ENCODE measurements at regions of chr12 and their contacts with region 1.

Region 1: DNA sequence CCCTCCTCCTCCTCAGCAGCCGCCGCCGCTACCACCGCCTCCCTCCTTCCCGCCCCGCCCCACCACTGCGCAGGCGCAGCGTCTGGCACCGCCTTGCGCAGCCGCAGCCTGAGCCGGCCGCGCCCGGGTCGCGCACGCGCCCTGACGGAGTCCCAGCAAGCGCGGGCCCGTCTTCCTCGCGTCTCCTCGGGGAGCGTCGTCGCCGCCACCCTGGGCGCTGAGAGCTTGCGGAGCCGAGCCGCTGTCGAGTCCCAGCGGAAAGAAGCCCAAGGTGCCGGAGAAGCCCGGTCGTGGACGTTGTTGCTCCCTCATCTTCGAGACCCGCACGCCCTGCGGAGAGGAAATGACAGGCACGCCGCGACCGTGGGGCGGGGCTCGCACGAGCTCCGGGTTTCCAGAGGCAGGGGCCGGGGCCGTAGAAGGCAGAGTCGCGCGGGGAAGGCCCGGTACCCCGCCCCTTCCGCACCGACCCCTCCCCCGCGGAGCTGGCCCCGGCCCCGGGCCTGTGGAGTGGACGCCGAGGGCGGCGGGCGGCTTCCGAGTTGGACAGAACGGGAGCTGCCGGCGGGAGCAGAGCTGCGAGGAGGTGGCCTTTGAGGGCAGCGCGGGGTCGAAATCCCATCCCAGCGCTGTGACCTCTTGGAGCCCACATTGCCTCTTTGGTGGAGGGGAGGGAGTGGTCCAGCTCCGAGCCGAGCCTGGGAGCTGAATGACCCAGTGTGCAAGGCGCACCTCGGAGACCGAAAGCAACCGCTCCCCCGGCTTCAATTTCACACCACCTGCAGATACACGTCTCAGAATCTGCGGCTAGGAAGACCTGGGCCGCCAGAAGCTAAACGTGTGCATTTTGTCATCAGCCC is 469 bp upstream of the RAB35 start:
- DNase-seq: no peak
- ATAC-seq: peak; percentile 64
- H3K4me3 ChIP-seq: peak overlapping the region; percentile 76
- H3K27ac ChIP-seq: peak overlapping the region; percentile 97
- H3K4me1 ChIP-seq: peaks cover 54% of the 10 kb centered on the region
- H3K27me3 ChIP-seq: no peaks in the 10 kb centered on the region
- CTCF ChIP-seq: no peak
- EP300 ChIP-seq: no peak
- POLR2A ChIP-seq: peak; percentile 90
- RAD21 ChIP-seq: no peak

Region 2: GRCh38 chr12:119988782-119989668 is 128.0 kb before region 1 on chr12 and contains the start of gene BICDL1:
- CTCF ChIA-PET with region 1: interaction called, 4 read pairs
- POLR2A ChIA-PET with region 1: interaction called, 18 read pairs
- RAD21 ChIA-PET with region 1: interaction called, 5 read pairs
- SMC1A ChIA-PET with region 1: no interaction called
- in situ Hi-C with region 1: no loop called
- intact Hi-C with region 1: no loop called
- DNase-seq: peak; percentile 69
- ATAC-seq: peak; percentile 91
- H3K4me3 ChIP-seq: peak within 1 kb of the TSS; percentile 82
- H3K27ac ChIP-seq: no peak within 1 kb of the TSS
- H3K4me1 ChIP-seq: peaks cover 6% of the 10 kb centered on the region
- H3K27me3 ChIP-seq: no peaks in the 10 kb centered on the region
- CTCF ChIP-seq: peak in 1 of 3 experiments; percentile 16; a peak in 1 of 6 replicates
- EP300 ChIP-seq: no peak
- POLR2A ChIP-seq: peak; percentile 60
- RAD21 ChIP-seq: no peak
- polyA plus RNA-seq, gene BICDL1: 0.72 to 1.2 TPM

Region 3: DNA sequence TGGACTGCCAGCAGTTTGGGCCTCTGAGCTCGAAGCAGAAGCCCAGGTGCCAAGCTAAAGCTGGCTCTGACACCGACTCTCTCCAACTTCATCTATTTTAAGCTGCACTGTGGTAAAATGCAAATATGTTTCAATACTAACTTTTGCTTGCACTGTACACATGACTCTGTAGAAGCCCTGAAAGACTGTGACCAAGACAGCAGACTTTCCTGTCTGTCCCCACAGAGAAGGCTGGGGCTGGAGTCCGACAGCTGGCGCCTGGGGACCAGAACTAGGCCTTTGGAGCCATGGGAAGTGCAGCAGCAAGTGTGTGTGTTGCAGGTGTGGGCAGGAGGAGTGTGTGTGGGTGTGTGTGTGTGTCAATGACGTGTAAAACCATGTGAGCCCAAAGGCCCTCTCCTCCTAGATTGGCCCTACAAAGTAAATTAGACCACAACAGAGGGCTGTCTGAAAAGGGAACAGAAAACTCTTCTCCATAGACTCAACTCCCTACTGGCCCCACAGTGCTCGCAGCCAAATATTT is 15.9 kb after region 1 on chr12:
- CTCF ChIA-PET with region 1: interaction called, 57 read pairs
- POLR2A ChIA-PET with region 1: interaction called, 141 read pairs
- RAD21 ChIA-PET with region 1: interaction called, 118 read pairs
- SMC1A ChIA-PET with region 1: interaction called, 142 read pairs
- in situ Hi-C with region 1: no loop called
- intact Hi-C with region 1: loop called (anchors 2 kb)
- DNase-seq: peak; percentile 92
- ATAC-seq: peak; percentile 95
- H3K4me3 ChIP-seq: peak overlapping the region; percentile 42; the same call in 1 of the 2 replicates
- H3K27ac ChIP-seq: peak overlapping the region; percentile 84
- H3K4me1 ChIP-seq: peaks cover 31% of the 10 kb centered on the region
- H3K27me3 ChIP-seq: no peaks in the 10 kb centered on the region
- CTCF ChIP-seq: no peak
- EP300 ChIP-seq: peak; percentile 51 to 58; a peak in 2 of 4 replicates
- POLR2A ChIP-seq: peak; percentile 78
- RAD21 ChIP-seq: no peak

Region 4: GRCh38 chr12:120167529-120168095 is 50.6 kb after region 1 on chr12:
- CTCF ChIA-PET with region 1: interaction called, 7 read pairs
- POLR2A ChIA-PET with region 1: interaction called, 43 read pairs
- RAD21 ChIA-PET with region 1: interaction called, 17 read pairs
- SMC1A ChIA-PET with region 1: interaction called, 32 read pairs
- in situ Hi-C with region 1: no loop called
- intact Hi-C with region 1: loop called (anchors 5 kb)
- DNase-seq: no peak
- ATAC-seq: peak; percentile 46
- H3K4me3 ChIP-seq: no peak overlapping the region
- H3K27ac ChIP-seq: peak overlapping the region; percentile 76
- H3K4me1 ChIP-seq: peaks cover 19% of the 10 kb centered on the region
- H3K27me3 ChIP-seq: no peaks in the 10 kb centered on the region
- CTCF ChIP-seq: no peak
- EP300 ChIP-seq: no peak
- POLR2A ChIP-seq: no peak
- RAD21 ChIP-seq: no peak

Region 5: DNA sequence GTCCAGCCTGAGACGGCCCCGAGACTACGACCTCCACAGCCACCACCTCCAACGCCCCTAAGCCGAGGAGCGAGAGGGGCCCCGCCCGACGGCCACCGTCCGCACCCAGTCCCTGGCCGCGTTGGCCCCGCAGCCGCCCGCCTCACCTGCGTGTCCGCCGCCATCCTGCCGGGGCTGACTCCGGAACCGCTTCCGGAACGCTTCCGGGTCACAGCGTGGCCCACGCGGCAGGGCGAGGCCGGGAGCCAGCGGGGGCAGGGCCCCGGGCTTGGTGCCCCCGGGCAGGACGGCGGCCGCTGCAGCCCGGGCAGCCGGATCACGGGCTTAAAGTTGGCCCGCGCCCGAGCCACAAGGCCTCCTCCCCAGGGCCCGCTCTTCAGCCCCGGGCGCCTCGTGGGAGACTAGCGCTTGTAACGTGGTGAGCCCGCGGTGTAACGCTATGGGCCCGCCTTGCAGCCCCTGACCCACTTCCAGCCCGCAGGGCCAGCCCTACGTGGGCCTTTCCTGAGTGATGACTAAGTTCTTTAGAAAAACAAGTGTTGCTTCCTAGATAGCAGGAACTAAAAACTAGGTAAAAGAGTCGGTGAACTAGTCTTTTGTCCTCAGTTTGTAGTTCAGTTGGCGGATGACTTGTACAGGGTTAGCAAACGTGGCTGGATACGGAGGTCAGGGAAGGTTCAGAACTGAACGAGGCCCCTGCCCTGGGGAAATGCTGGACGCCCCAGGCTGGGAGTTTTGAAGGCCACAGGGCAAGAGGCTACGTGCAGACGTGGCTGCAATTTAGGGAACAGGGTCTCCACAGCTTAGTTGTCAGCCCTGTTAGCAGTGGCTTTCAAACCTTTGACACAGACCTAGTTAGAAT is 77.7 kb after region 1 on chr12 and contains the start of gene GCN1:
- CTCF ChIA-PET with region 1: interaction called, 61 read pairs
- POLR2A ChIA-PET with region 1: interaction called, 76 read pairs
- RAD21 ChIA-PET with region 1: interaction called, 4 read pairs
- SMC1A ChIA-PET with region 1: interaction called, 37 read pairs
- in situ Hi-C with region 1: no loop called
- intact Hi-C with region 1: loop called (anchors 2 kb)
- DNase-seq: no peak
- ATAC-seq: peak; percentile 86
- H3K4me3 ChIP-seq: peak within 1 kb of the TSS; percentile 62
- H3K27ac ChIP-seq: peak within 1 kb of the TSS; percentile 93
- H3K4me1 ChIP-seq: peaks cover 33% of the 10 kb centered on the region
- H3K27me3 ChIP-seq: no peaks in the 10 kb centered on the region
- CTCF ChIP-seq: no peak
- EP300 ChIP-seq: no peak
- POLR2A ChIP-seq: peak; percentile 96
- RAD21 ChIP-seq: no peak
- polyA plus RNA-seq, gene GCN1: 10.8 to 12.1 TPM

Region 6: DNA sequence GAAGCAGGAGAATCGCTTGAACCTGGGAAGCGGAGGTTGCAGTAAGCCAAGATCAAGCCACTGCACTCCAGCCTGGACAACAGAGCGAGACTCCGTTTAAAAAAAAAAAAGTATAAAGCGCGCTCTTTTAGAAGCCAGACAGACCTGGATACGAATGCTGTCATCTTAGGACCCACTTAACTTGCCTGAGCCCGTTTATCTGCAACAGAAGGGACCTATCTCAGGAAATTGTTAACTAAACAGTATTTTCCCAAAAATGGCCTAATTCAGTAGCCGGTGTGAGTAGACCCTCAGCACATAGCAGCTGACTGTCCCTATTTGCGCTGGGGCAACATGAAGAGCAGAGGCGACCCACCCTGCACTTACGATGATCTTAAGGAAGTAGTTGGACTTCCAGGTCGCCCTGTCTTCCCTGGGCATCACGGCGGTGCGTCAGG is 83.4 kb after region 1 on chr12:
- CTCF ChIA-PET with region 1: interaction called, 61 read pairs
- POLR2A ChIA-PET with region 1: interaction called, 76 read pairs
- RAD21 ChIA-PET with region 1: interaction called, 58 read pairs
- SMC1A ChIA-PET with region 1: interaction called, 37 read pairs
- in situ Hi-C with region 1: no loop called
- intact Hi-C with region 1: loop called (anchors 2 kb)
- DNase-seq: no peak
- ATAC-seq: no peak
- H3K4me3 ChIP-seq: peak overlapping the region; percentile 92
- H3K27ac ChIP-seq: peak overlapping the region; percentile 87
- H3K4me1 ChIP-seq: peaks cover 17% of the 10 kb centered on the region
- H3K27me3 ChIP-seq: no peaks in the 10 kb centered on the region
- CTCF ChIP-seq: no peak
- EP300 ChIP-seq: no peak
- POLR2A ChIP-seq: no peak
- RAD21 ChIP-seq: no peak

Region 7: GRCh38 chr12:120265473-120266179 is 148.6 kb after region 1 on chr12 and contains the start of gene PXN:
- CTCF ChIA-PET with region 1: no interaction called
- POLR2A ChIA-PET with region 1: interaction called, 8 read pairs
- RAD21 ChIA-PET with region 1: interaction called, 3 read pairs
- SMC1A ChIA-PET with region 1: no interaction called
- in situ Hi-C with region 1: no loop called
- intact Hi-C with region 1: loop called (anchors 10 kb)
- DNase-seq: peak; percentile 28
- ATAC-seq: peak; percentile 95
- H3K4me3 ChIP-seq: peak within 1 kb of the TSS; percentile 63
- H3K27ac ChIP-seq: no peak within 1 kb of the TSS
- H3K4me1 ChIP-seq: 0 out of 2 replicates have a peak, but pooled peaks cover 3% of the 10 kb centered on the region
- H3K27me3 ChIP-seq: peaks cover 1 to 4% of the 10 kb centered on the region in 2 experiments; a peak in 3 of 4 replicates
- CTCF ChIP-seq: peak; percentile 67 to 87 (median 74)
- EP300 ChIP-seq: no peak
- POLR2A ChIP-seq: peak; percentile 78
- RAD21 ChIP-seq: peak; percentile 81
- polyA plus RNA-seq, gene PXN: 2.5 to 2.6 TPM